B cell (primary cell): ENCODE measurements at regions of chr7 and their contacts with region 1.

Region 1: DNA sequence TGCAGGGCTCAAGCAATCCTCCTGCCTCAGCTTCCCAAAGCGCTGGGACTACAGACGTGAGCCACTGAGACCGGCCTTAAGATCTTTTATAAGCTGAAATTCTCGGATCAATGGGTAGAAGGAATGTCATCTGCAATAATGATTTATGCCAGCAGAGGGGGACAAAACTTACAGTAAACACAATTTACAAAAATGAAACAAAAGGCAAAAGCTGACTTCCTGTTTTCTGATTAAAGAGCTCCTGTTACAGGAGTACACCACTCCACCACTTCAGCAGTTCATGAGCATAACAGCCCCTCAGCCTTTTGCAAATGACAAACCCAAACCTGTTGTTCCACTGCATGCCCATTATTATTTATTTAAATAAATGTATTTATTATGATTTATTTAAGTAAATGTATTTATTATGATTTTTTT is 88.5 kb upstream of the ATP6V0A4 start:
- DNase-seq: peak; percentile 74
- ATAC-seq: peak; percentile 81
- H3K4me3 ChIP-seq: no peak overlapping the region
- H3K4me3 Mint-ChIP-seq: no peak overlapping the region
- H3K27ac ChIP-seq: no peak overlapping the region
- H3K27ac Mint-ChIP-seq: peak overlapping the region; percentile 22
- H3K4me1 ChIP-seq: peaks cover 0 to 4% of the 10 kb centered on the region in 2 donors
- H3K4me1 Mint-ChIP-seq: peaks cover 5% of the 10 kb centered on the region
- H3K27me3 ChIP-seq: no peaks in the 10 kb centered on the region
- H3K27me3 Mint-ChIP-seq: peaks cover 2% of the 10 kb centered on the region
- CTCF ChIP-seq: peak; percentile 75

Region 2: GRCh38 chr7:138825049-138825721 is 61.3 kb before region 1 on chr7:
- CTCF ChIA-PET with region 1: no interaction called
- POLR2A ChIA-PET with region 1: no interaction called
- intact Hi-C with region 1: no loop called
- DNase-seq: no peak
- ATAC-seq: no peak
- H3K4me3 ChIP-seq: no peak overlapping the region
- H3K4me3 Mint-ChIP-seq: no peak overlapping the region
- H3K27ac ChIP-seq: no peak overlapping the region
- H3K27ac Mint-ChIP-seq: no peak overlapping the region
- H3K4me1 ChIP-seq: no peaks in the 10 kb centered on the region
- H3K4me1 Mint-ChIP-seq: no peaks in the 10 kb centered on the region
- H3K27me3 ChIP-seq: no peaks in the 10 kb centered on the region
- H3K27me3 Mint-ChIP-seq: no peaks in the 10 kb centered on the region
- CTCF ChIP-seq: no peak

Region 3: GRCh38 chr7:138876326-138876725 is 10.2 kb before region 1 on chr7:
- CTCF ChIA-PET with region 1: interaction called, 10 read pairs
- POLR2A ChIA-PET with region 1: no interaction called
- intact Hi-C with region 1: no loop called
- DNase-seq: no peak
- ATAC-seq: no peak
- H3K4me3 ChIP-seq: no peak overlapping the region
- H3K4me3 Mint-ChIP-seq: no peak overlapping the region
- H3K27ac ChIP-seq: no peak overlapping the region
- H3K27ac Mint-ChIP-seq: no peak overlapping the region
- H3K4me1 ChIP-seq: no peaks in the 10 kb centered on the region
- H3K4me1 Mint-ChIP-seq: no peaks in the 10 kb centered on the region
- H3K27me3 ChIP-seq: no peaks in the 10 kb centered on the region
- H3K27me3 Mint-ChIP-seq: no peaks in the 10 kb centered on the region
- CTCF ChIP-seq: no peak

Region 4: GRCh38 chr7:138981332-138982203 is 95.1 kb after region 1 on chr7 and contains the start of gene KIAA1549:
- CTCF ChIA-PET with region 1: no interaction called
- POLR2A ChIA-PET with region 1: no interaction called
- intact Hi-C with region 1: loop called (anchors 2 kb)
- DNase-seq: peak; percentile 65
- ATAC-seq: peak; percentile 88
- H3K4me3 ChIP-seq: peak within 1 kb of the TSS; percentile 31 to 62 (median 52)
- H3K4me3 Mint-ChIP-seq: peak within 1 kb of the TSS; percentile 91
- H3K27ac ChIP-seq: no peak within 1 kb of the TSS
- H3K27ac Mint-ChIP-seq: peak within 1 kb of the TSS; percentile 50
- H3K4me1 ChIP-seq: peaks cover 12 to 17% of the 10 kb centered on the region in 2 donors
- H3K4me1 Mint-ChIP-seq: peaks cover 14% of the 10 kb centered on the region
- H3K27me3 ChIP-seq: peaks cover 0 to 39% (median 24%) of the 10 kb centered on the region in 4 experiments
- H3K27me3 Mint-ChIP-seq: peaks cover 46% of the 10 kb centered on the region
- CTCF ChIP-seq: no peak
- total RNA-seq, gene KIAA1549: 0.36 and 0.52 TPM in 2 replicates

Region 5: GRCh38 chr7:139058943-139059342 is 172.4 kb after region 1 on chr7:
- CTCF ChIA-PET with region 1: no interaction called
- POLR2A ChIA-PET with region 1: no interaction called
- intact Hi-C with region 1: no loop called
- DNase-seq: no peak
- ATAC-seq: no peak
- H3K4me3 ChIP-seq: no peak overlapping the region
- H3K4me3 Mint-ChIP-seq: no peak overlapping the region
- H3K27ac ChIP-seq: no peak overlapping the region
- H3K27ac Mint-ChIP-seq: peak overlapping the region; percentile 22
- H3K4me1 ChIP-seq: no peaks in the 10 kb centered on the region
- H3K4me1 Mint-ChIP-seq: peaks cover 4% of the 10 kb centered on the region
- H3K27me3 ChIP-seq: no peaks in the 10 kb centered on the region
- H3K27me3 Mint-ChIP-seq: no peaks in the 10 kb centered on the region
- CTCF ChIP-seq: no peak

Region 6: GRCh38 chr7:139124084-139124914 is 237.8 kb after region 1 on chr7:
- CTCF ChIA-PET with region 1: interaction called, 12 read pairs
- POLR2A ChIA-PET with region 1: interaction called, 9 read pairs
- intact Hi-C with region 1: no loop called
- DNase-seq: no peak
- ATAC-seq: peak; percentile 31
- H3K4me3 ChIP-seq: no peak overlapping the region
- H3K4me3 Mint-ChIP-seq: no peak overlapping the region
- H3K27ac ChIP-seq: no peak overlapping the region
- H3K27ac Mint-ChIP-seq: no peak overlapping the region
- H3K4me1 ChIP-seq: peaks cover 21 to 28% of the 10 kb centered on the region in 2 donors
- H3K4me1 Mint-ChIP-seq: peaks cover 38% of the 10 kb centered on the region
- H3K27me3 ChIP-seq: no peaks in the 10 kb centered on the region
- H3K27me3 Mint-ChIP-seq: no peaks in the 10 kb centered on the region
- CTCF ChIP-seq: no peak